Activated CD8-positive, alpha-beta T cell treated with anti-CD3 and anti-CD28 coated beads, Interleukin-2, amount 10 ng/mL, durations not matched to agents 7 days and 5 days (primary cell): ENCODE measurements at regions of chr5 and their contacts with region 1.

Region 1: GRCh38 chr5:157761690-157762621 is 18.4 kb downstream of the LSM11 start:
- DNase-seq: peak; percentile 53
- ATAC-seq: peak; percentile 90
- H3K4me3 Mint-ChIP-seq: no peak overlapping the region
- H3K27ac Mint-ChIP-seq: no peak overlapping the region
- H3K4me1 Mint-ChIP-seq: no peaks in the 10 kb centered on the region
- H3K27me3 Mint-ChIP-seq: no peaks in the 10 kb centered on the region

Region 2: DNA sequence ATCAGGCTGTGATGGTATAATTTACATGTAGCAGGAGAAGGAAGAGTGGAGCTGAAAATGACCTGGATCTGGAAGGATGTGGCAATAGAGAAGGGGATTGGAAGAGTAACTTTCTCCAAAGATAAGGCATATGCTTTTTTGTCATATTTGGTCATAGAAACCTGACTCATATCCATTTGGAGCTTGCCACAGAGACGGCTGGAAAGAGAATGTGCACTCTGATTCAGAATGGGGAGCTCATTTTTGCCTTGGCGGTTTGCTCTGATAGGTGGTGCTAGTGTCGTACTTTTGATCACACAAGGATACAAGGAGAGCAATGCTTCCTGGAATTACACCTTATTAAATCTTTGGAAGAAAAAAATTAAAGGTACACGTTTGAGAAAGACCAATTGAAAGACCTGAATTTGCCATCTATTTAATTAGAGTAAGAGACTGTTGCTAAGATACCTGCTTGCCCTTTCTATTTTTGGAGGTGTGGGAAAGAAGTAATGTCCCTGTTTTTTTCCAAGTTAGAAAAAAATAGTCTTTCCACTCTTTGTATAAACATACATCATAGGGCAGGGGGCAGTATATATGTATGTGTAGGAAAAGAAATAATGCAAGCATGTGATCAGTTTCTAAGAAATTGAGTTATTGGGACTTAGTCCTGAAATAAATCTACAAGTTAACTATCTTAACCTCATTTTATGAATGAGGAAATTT is 13.0 kb before region 1 on chr5:
- CTCF ChIA-PET with region 1: interaction called, 41 read pairs
- POLR2A ChIA-PET with region 1: no interaction called
- DNase-seq: no peak
- ATAC-seq: no peak
- H3K4me3 Mint-ChIP-seq: no peak overlapping the region
- H3K27ac Mint-ChIP-seq: no peak overlapping the region
- H3K4me1 Mint-ChIP-seq: peaks cover 22% of the 10 kb centered on the region
- H3K27me3 Mint-ChIP-seq: no peaks in the 10 kb centered on the region

Region 3: DNA sequence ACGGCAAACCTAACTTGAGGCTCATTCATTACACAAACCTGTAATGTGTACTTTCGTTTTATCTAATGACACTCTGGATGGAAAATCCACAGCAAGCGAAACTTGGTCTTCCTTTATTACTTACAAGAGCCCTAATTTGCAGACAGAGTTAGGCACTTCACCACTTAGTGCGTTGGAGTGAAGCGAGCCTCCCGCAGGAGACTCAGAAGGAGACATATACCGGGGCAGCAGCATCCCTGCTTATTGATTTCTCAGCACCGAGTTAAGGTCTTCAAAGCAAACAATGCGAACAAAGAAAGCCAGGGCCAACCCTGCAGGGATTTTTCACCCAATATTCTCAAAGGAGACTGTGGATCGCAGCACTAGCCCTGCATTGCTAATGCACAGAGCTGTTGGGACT is 10.2 kb after region 1 on chr5:
- CTCF ChIA-PET with region 1: interaction called, 20 read pairs
- POLR2A ChIA-PET with region 1: no interaction called
- DNase-seq: no peak
- ATAC-seq: no peak
- H3K4me3 Mint-ChIP-seq: no peak overlapping the region
- H3K27ac Mint-ChIP-seq: no peak overlapping the region
- H3K4me1 Mint-ChIP-seq: no peaks in the 10 kb centered on the region
- H3K27me3 Mint-ChIP-seq: peaks cover 7% of the 10 kb centered on the region

Region 4: DNA sequence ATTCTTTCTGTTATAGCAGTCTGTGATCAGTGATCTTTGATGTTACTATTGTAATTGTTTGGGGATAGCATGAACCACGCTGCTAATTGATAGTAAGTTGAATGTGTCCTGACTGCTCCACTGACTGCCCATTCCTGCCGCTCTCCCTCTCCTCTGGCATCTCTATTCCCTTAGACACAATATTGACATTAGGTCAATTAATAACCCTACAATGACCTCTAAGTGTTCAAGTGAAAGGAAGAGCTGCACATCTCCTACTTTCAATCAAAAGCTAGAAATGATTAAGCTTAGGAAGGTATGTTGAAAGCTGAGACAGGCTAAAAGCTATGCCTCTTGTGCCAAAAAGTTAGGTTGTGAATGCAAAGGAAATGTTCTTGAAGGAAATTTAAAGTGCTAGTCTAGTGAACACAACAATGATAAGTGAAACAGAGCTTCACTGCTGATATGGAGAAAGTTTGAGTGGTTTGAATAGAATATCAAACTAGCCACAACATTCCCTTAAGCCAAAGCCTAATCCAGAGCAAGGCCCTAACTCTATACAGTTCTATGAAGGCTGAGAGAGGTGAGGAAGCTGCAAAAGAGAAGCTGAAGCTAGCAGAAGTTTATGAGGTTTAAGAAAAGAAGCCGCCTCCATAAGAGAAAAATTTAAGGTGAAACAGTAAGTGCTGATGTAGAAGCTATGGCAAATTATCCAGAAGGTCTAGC is 84.1 kb after region 1 on chr5:
- CTCF ChIA-PET with region 1: no interaction called
- POLR2A ChIA-PET with region 1: no interaction called
- DNase-seq: no peak
- ATAC-seq: no peak
- H3K4me3 Mint-ChIP-seq: no peak overlapping the region
- H3K27ac Mint-ChIP-seq: no peak overlapping the region
- H3K4me1 Mint-ChIP-seq: peaks cover 3% of the 10 kb centered on the region
- H3K27me3 Mint-ChIP-seq: no peaks in the 10 kb centered on the region